ENCODE measurements at regions of chr2 and their contacts with region 1.

Region 1: DNA sequence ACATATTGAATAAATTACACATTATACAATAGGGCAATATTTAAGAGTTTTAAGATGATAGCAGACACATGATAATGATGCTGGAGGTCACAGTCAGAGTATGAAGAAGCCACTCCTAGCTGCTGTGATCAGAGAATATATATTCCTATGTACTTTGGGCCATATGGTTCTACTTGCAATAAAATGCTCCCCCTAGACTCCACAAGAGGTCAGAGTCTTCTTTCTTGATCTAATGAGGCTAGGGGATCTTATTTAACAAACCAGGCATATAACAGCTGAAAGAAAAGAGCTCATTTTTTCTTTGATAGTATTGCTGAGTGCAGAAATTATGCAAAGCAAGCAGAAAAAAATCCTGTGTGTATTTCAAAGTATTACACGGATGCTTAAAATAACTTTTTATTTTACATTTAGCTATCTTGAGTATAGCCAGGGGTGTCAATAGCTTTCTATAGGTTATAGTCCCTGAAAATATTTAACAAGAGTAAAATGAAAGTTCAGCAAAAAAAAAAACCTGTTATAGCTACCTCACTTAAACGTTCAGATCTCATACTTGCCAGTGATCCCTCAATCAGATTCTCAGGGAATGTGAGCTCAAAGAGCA is 748.7 kb upstream of the CHAC2 start:
- DNase-seq: no peak
- H3K4me3 ChIP-seq: no peak overlapping the region
- H3K27ac ChIP-seq: no peak overlapping the region
- H3K4me1 ChIP-seq: no peaks in the 10 kb centered on the region
- H3K27me3 ChIP-seq: no peaks in the 10 kb centered on the region
- CTCF ChIP-seq: peak; percentile 6 to 23

Region 2: DNA sequence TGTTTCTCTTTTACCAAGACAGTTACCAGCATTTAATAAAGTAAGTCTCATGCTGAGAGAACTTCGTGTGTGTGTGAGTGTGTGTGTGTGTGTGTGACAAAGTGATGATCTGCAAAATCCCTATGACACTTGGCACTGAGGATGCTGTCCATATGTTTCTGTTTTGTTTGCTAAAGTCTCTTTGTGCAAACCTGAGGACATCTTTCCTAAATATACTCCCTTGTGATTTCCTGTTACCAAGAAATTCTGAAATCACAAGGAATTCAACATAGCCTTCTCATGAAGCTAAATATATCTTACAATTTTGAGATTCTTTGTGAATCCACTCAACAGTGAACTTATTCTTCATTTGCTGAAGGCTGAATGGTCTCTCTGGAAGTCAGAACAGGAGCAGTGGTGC is 627.3 kb before region 1 on chr2:
- CTCF ChIA-PET with region 1: no interaction called
- dilution Hi-C with region 1: no loop called
- in situ Hi-C with region 1: no loop called
- intact Hi-C with region 1: no loop called
- DNase-seq: no peak
- H3K4me3 ChIP-seq: no peak overlapping the region
- H3K27ac ChIP-seq: no peak overlapping the region
- H3K4me1 ChIP-seq: no peaks in the 10 kb centered on the region
- H3K27me3 ChIP-seq: no peaks in the 10 kb centered on the region
- CTCF ChIP-seq: no peak

Region 3: GRCh38 chr2:53445386-53446072 is 426.6 kb after region 1 on chr2:
- CTCF ChIA-PET with region 1: interaction called, 3 read pairs
- dilution Hi-C with region 1: no loop called
- in situ Hi-C with region 1: no loop called
- intact Hi-C with region 1: loop called (anchors 10 kb)
- DNase-seq: peak; percentile 55
- H3K4me3 ChIP-seq: no peak overlapping the region
- H3K27ac ChIP-seq: no peak overlapping the region
- H3K4me1 ChIP-seq: peaks cover 6% of the 10 kb centered on the region
- H3K27me3 ChIP-seq: no peaks in the 10 kb centered on the region
- CTCF ChIP-seq: no peak

Region 4: GRCh38 chr2:53715568-53715967 is 696.6 kb after region 1 on chr2:
- CTCF ChIA-PET with region 1: interaction called, 4 read pairs
- dilution Hi-C with region 1: no loop called
- in situ Hi-C with region 1: no loop called
- intact Hi-C with region 1: loop called (anchors 10 kb)
- DNase-seq: no peak
- H3K4me3 ChIP-seq: no peak overlapping the region
- H3K27ac ChIP-seq: no peak overlapping the region
- H3K4me1 ChIP-seq: no peaks in the 10 kb centered on the region
- H3K27me3 ChIP-seq: no peaks in the 10 kb centered on the region
- CTCF ChIP-seq: peak; percentile 50 to 63